RWPE1 (cell line): ENCODE measurements at regions of chr1 and their contacts with region 1.

Region 1: DNA sequence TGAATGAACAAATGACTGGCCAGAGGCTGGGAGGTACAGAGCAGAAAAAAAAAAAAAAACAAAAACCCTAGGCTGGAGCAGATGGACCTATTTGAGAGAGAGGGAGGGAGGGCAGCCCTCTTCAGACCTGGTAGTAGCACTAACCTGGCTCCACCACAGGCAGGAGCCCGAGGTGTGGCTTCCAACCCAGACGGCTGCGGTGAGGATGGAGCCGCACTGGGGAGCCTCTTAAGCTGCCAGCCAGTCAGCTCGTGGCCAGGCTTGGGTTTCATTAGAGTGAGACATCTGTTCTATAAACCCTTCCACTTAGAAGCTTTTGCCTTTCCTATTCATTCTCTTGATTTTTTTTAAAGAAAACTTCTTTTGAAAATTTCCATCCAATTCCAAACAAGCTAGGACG is 16.8 kb downstream of the LGR6 start:
- DNase-seq: no peak
- H3K27ac ChIP-seq: peak overlapping the region; percentile 19; the same call in 1 of the 2 replicates
- CTCF ChIP-seq: peak; percentile 44

Region 2: GRCh38 chr1:201999625-202000238 is 210.7 kb before region 1 on chr1:
- CTCF ChIA-PET with region 1: no interaction called
- POLR2A ChIA-PET with region 1: no interaction called
- DNase-seq: peak; percentile 78
- H3K27ac ChIP-seq: no peak overlapping the region
- CTCF ChIP-seq: peak; percentile 63

Region 3: GRCh38 chr1:202221911-202222909 is 11.8 kb after region 1 on chr1:
- CTCF ChIA-PET with region 1: interaction called, 18 read pairs
- POLR2A ChIA-PET with region 1: no interaction called
- DNase-seq: peak; percentile 96
- H3K27ac ChIP-seq: peak overlapping the region; percentile 89
- CTCF ChIP-seq: no peak